ENCODE measurements at regions of chrX and their contacts with region 1.

Region 1: DNA sequence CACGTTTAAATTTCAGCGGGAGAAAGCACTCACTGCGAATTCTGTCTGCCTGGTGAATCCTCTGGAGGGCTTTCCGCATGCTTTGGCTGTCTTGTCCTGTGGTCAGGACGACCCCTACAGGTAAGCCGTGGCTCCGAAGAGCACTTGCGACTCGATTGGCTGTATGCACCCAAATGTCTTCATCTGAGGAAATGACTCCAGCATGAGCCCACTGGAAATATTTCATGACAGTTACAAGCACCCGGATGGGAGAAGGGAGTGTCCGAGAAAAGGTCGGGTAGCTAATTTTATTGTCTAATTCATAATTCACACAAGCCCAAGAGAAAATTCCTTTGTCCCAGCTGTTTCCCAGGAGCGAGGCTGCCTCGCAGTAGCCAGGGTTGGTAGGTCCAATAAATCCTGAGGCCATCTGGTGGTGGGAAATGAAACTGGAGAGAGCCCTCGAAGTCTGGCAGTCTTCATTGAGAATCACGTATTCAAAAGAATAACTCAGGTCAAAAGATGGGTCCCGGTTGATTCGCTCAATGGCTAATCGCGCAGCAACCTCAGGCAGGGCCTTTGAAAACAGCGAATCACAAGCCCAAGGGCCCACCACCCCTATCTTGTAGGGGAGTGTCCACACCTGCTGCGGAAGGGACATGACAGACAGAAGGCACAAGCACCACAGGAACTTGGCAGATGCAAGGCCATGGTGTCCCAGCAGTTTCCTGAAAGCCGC is 6.6 kb downstream of the GUCY2F start:
- DNase-seq: no peak
- ATAC-seq: peak; percentile 65

Region 2: GRCh38 chrX:108199691-108200090 is 1275.6 kb before region 1 on chrX:
- intact Hi-C with region 1: loop called (anchors 10 kb)
- DNase-seq: no peak
- ATAC-seq: no peak

Region 3: DNA sequence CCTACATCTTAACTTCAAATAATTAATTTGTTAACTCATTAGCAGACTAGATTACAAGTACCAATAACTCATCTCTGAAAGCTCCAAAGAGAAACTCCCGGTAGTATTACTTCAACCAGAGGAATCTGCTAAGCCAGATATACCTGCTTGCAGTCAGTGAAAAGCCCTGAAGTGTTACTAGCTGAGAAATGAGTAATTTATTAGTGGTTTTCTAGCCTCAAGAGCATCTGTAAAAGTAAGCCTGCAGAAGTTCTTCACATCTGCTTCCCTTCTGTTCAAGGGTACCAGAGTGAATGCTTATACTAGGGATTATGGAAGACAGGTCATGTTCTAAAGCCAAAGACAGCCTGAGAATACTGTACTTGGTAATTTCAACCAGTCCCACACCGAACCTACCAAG is 773.7 kb before region 1 on chrX:
- intact Hi-C with region 1: loop called (anchors 10 kb)
- DNase-seq: no peak
- ATAC-seq: no peak

Measured in Right ventricle myocardium inferior (tissue), 1 donor.